ENCODE measurements at regions of chr6 and their contacts with region 1.

Region 1: GRCh38 chr6:75526502-75527127 is 33.0 kb upstream of the FILIP1 start:
- DNase-seq: peak; percentile 23 to 68
- ATAC-seq: peak; percentile 86

Region 2: GRCh38 chr6:73969971-73970970 is 1556.3 kb before region 1 on chr6:
- intact Hi-C with region 1: no loop called
- DNase-seq: no peak
- ATAC-seq: no peak

Region 3: GRCh38 chr6:75266716-75267291 is 259.8 kb before region 1 on chr6:
- intact Hi-C with region 1: loop called in 1 of 2 experiments (anchors 5 kb)
- DNase-seq: no peak
- ATAC-seq: peak; percentile 70

Measured in left colon (tissue), 2 donors.